ENCODE measurements at regions of chr6 and their contacts with region 1.

Region 1: GRCh38 chr6:46491628-46492547 is 639 bp upstream of the RCAN2 start:
- DNase-seq: peak; percentile 55 to 87 (median 81)
- ATAC-seq: peak; percentile 92 to 93
- H3K4me3 ChIP-seq: peak overlapping the region; percentile 85
- H3K27ac ChIP-seq: peak overlapping the region; percentile 84
- H3K4me1 ChIP-seq: no peaks in the 10 kb centered on the region
- H3K27me3 ChIP-seq: no peaks in the 10 kb centered on the region

Region 2: GRCh38 chr6:46352541-46353268 is 139.2 kb before region 1 on chr6:
- intact Hi-C with region 1: no loop called
- DNase-seq: peak in 1 of 3 donors; percentile 33
- ATAC-seq: no peak
- H3K4me3 ChIP-seq: no peak overlapping the region
- H3K27ac ChIP-seq: peak overlapping the region; percentile 24
- H3K4me1 ChIP-seq: peaks cover 14% of the 10 kb centered on the region
- H3K27me3 ChIP-seq: no peaks in the 10 kb centered on the region

Region 3: GRCh38 chr6:46565531-46565930 is 73.6 kb after region 1 on chr6:
- intact Hi-C with region 1: no loop called
- DNase-seq: no peak
- ATAC-seq: no peak
- H3K4me3 ChIP-seq: no peak overlapping the region
- H3K27ac ChIP-seq: no peak overlapping the region
- H3K4me1 ChIP-seq: no peaks in the 10 kb centered on the region
- H3K27me3 ChIP-seq: no peaks in the 10 kb centered on the region

Region 4: DNA sequence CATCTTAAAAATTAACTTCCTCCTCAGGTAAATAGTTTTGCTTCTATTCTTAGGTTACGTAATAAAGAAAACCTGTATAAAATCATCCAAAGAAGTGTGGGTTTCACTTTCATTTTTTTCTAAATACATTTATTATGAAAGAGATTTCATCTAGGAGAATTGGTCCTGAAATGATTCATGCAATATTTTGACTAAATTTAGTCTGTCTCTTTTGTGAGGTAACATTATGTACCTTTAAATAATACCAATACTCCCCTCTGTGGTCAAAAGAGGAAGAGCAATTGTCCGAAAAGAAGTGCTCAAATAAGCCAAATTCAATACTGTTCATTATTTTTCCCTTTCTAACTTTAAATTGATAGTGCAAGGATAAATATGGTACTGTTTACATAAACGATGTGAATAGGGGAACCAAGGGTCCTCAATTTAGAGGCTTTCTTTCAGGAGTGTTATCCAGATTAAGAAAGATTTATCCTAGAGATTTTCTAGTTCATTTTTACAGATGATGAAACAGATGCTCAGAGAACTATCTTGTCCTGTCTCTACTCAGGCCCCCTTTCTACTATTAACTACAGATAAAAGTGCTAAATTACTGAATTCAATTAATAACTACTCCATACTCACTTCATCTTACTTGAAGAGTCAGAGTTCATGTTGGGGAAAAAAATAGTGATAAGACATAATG is 134.5 kb after region 1 on chr6:
- intact Hi-C with region 1: loop called in 2 of 4 experiments (anchors 10 kb)
- DNase-seq: no peak
- ATAC-seq: peak in 1 of 2 donors; percentile 31
- H3K4me3 ChIP-seq: no peak overlapping the region
- H3K27ac ChIP-seq: no peak overlapping the region
- H3K4me1 ChIP-seq: no peaks in the 10 kb centered on the region
- H3K27me3 ChIP-seq: no peaks in the 10 kb centered on the region

Measured in right cardiac atrium (tissue), 5 donors.